Psoas muscle (tissue), 8 donors: ENCODE measurements at regions of chr11 and their contacts with region 1.

Region 1: GRCh38 chr11:26753723-26754504 is 32.1 kb upstream of the SLC5A12 start:
- DNase-seq: peak; percentile 18 to 52
- ATAC-seq: peak; percentile 53 to 92 (median 79)
- H3K4me3 ChIP-seq: no peak overlapping the region
- H3K27ac ChIP-seq: no peak overlapping the region
- H3K4me1 ChIP-seq: no peaks in the 10 kb centered on the region
- H3K27me3 ChIP-seq: no peaks in the 10 kb centered on the region
- CTCF ChIP-seq: peak; percentile 69

Region 2: GRCh38 chr11:26063915-26064314 is 690.0 kb before region 1 on chr11:
- intact Hi-C with region 1: no loop called
- DNase-seq: no peak
- ATAC-seq: no peak
- H3K4me3 ChIP-seq: no peak overlapping the region
- H3K27ac ChIP-seq: no peak overlapping the region
- H3K4me1 ChIP-seq: no peaks in the 10 kb centered on the region
- H3K27me3 ChIP-seq: no peaks in the 10 kb centered on the region
- CTCF ChIP-seq: no peak

Region 3: DNA sequence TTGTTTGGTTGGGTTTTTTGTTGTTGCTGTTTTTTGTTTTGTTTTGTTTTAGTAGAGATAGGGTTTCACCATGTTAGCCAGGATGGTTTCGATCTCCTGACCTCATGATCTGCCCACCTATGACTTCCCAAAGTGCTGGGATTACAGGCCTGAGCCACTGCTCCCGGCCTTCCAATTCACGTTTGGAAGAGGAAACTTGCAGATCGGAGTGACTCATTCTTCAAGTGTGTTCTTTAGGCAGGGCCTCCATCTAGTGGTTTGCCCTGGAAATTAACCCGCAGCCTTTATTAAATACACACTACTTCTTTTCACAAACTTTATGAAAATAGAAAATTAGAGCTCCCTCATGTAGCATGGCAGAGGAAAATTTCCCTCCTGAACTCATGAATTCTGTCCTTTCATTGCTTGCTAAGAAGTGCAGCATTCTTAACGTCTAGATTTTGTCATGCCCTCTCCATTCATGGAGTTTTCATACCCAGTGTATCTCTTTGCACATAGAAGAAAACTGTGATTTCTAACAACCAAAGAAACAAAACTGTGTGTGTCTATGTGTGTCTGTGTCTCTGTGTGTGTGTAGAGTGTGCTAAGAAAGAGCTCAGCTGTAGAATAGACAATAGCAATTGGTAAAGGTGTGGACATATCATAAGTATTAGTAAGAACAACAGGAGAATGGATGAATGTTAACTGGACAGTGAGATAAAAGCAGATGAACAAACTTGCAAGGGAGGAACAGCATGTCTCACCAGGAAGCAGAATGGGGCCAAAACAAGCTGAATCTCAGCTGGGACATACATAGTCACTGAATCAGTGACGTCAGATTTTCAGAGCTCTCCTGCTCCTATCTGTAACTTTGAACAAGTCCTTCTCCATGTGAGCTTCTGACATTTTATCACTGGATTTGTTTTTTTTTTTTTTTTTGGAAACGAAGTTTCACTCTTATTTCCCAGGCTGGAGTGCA is 405.1 kb after region 1 on chr11:
- intact Hi-C with region 1: loop called (anchors 2 kb)
- DNase-seq: peak; percentile 18 to 45
- ATAC-seq: peak; percentile 73 to 98 (median 89)
- H3K4me3 ChIP-seq: no peak overlapping the region
- H3K27ac ChIP-seq: no peak overlapping the region
- H3K4me1 ChIP-seq: no peaks in the 10 kb centered on the region
- H3K27me3 ChIP-seq: no peaks in the 10 kb centered on the region
- CTCF ChIP-seq: peak; percentile 74

Region 4: DNA sequence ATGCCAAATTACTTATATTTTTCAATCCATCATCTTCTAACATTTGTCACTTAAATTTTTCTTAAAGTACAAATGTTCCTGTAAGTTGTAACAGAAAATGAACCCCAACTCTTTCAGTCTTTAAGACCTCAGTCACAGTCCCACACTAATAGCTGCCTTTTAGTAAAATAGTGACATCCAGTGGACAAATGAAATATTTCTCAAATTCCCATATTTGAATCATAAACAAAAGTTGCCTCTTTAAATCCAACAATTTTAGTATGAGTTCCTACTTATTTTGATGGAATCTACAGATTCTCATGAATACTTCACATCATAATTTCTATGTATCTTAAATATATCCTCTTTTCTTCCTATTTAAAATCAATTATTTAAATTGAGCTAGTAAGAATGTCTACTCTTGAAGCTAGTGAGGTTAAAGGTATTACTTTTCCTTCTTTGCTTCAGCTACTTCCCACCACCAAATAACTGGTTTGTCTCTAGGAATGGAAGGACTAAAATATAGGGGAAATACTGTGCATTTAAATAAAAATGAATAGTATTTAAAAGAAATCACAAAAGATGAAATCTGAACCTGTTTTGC is 743.5 kb after region 1 on chr11:
- intact Hi-C with region 1: loop called in 1 of 2 experiments (anchors 10 kb)
- DNase-seq: no peak
- ATAC-seq: peak in 2 of 4 donors; percentile 52 to 63
- H3K4me3 ChIP-seq: no peak overlapping the region
- H3K27ac ChIP-seq: no peak overlapping the region
- H3K4me1 ChIP-seq: peaks cover 31% of the 10 kb centered on the region
- H3K27me3 ChIP-seq: no peaks in the 10 kb centered on the region
- CTCF ChIP-seq: peak; percentile 44